ENCODE measurements at regions of chr3 and their contacts with region 1.

Region 1: GRCh38 chr3:171417813-171418212 is 42.4 kb downstream of the TNIK start:
- DNase-seq: no peak

Region 2: DNA sequence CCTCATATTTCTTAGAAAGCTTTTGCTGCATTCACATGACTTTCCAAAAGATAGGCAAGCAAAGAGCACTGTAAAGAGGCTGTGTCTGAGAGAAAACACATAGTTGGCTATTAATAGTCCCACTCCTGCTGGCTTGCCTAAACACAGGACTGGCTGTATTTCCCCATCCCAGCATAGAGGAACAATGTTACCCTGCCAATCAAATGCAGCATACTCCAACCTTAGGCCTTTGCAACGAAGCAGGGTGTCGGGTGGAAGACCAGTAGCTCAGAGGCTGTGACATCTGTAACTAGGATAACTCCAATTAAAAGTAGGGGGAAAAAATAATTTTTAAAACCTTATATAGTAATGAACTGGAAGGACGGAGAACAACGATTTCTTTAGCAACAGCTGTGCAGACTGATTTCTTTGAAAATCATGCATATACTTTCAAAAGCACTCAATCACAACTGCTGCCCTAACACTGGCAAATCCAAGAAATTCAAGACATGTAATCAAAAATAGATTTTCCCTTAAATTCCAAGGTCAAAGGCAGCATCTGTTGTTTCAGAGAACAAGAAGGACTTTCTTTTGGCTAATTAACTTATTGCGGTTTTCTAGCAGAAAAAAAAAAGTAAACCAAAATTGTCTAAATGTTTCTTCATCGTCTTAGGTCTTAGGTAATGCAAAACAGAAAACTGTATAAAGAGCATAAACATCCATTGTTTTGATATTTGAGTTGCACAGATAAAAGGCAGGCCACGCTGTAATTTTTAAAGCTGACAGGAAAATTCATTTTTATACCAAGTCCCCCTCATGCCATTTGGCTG is 96.9 kb before region 1 on chr3:
- intact Hi-C with region 1: loop called (anchors 5 kb)
- DNase-seq: no peak

Measured in cardiac septum (tissue), 1 donor.